PC-3 (cell line): ENCODE measurements at regions of chr5 and their contacts with region 1.

Region 1: GRCh38 chr5:87400305-87400899 is 12.3 kb downstream of the CCNH start:
- DNase-seq: peak; percentile 78
- ATAC-seq: peak; percentile 85
- H3K4me3 ChIP-seq: no peak overlapping the region
- H3K27ac ChIP-seq: no peak overlapping the region
- H3K4me1 ChIP-seq: peaks cover 7% of the 10 kb centered on the region; the same call in 1 of the 2 replicates
- H3K27me3 ChIP-seq: no peaks in the 10 kb centered on the region
- CTCF ChIP-seq: peak; percentile 94

Region 2: DNA sequence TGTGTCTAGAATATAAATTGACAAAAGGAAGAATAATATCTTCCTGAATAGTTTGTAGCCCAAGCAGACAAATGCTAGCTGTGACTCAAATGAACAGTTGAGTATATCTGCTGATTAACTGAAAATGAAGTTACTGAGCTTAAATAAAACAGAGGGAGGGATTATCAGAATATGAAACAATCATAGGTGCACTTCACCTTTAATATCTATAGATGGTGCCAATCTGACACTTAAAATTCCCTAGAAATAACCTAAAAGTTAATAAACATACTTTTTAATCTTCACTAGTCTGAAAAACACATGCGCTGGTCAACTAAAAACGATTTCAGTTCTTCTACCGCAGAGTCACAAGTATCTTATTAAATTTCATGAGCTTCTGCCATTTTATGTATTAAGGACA is 413.6 kb before region 1 on chr5:
- CTCF ChIA-PET with region 1: no interaction called
- POLR2A ChIA-PET with region 1: no interaction called
- intact Hi-C with region 1: loop called (anchors 5 kb)
- DNase-seq: peak; percentile 53
- ATAC-seq: peak; percentile 63
- H3K4me3 ChIP-seq: no peak overlapping the region
- H3K27ac ChIP-seq: no peak overlapping the region
- H3K4me1 ChIP-seq: no peaks in the 10 kb centered on the region
- H3K27me3 ChIP-seq: no peaks in the 10 kb centered on the region
- CTCF ChIP-seq: peak; percentile 69